Caco-2 (cell line): ENCODE measurements at regions of chr17 and their contacts with region 1.

Region 1: GRCh38 chr17:79796763-79797491 is at the start of gene CBX8:
- DNase-seq: peak; percentile 100
- H3K4me3 ChIP-seq: peak within 1 kb of the TSS; percentile 75
- H3K4me3 Mint-ChIP-seq: peak within 1 kb of the TSS; percentile 84
- H3K27ac Mint-ChIP-seq: peak within 1 kb of the TSS; percentile 85
- H3K4me1 ChIP-seq: peaks cover 28% of the 10 kb centered on the region
- H3K4me1 Mint-ChIP-seq: peaks cover 15% of the 10 kb centered on the region
- H3K27me3 ChIP-seq: no peaks in the 10 kb centered on the region
- H3K27me3 Mint-ChIP-seq: no peaks in the 10 kb centered on the region
- CTCF ChIP-seq: peak in 1 of 2 experiments; percentile 24
- total RNA-seq, gene CBX8: 34.3 and 36.6 TPM in 2 replicates

Region 2: GRCh38 chr17:79741751-79742588 is 55.0 kb before region 1 on chr17:
- CTCF ChIA-PET with region 1: interaction called, 24 read pairs
- POLR2A ChIA-PET with region 1: interaction called, 27 read pairs
- intact Hi-C with region 1: loop called (anchors 1 kb)
- DNase-seq: peak; percentile 91 to 98
- H3K4me3 ChIP-seq: peak overlapping the region; percentile 56
- H3K4me3 Mint-ChIP-seq: peak overlapping the region; percentile 75
- H3K27ac Mint-ChIP-seq: peak overlapping the region; percentile 45
- H3K4me1 ChIP-seq: peaks cover 60% of the 10 kb centered on the region
- H3K4me1 Mint-ChIP-seq: peaks cover 21% of the 10 kb centered on the region
- H3K27me3 ChIP-seq: no peaks in the 10 kb centered on the region
- H3K27me3 Mint-ChIP-seq: no peaks in the 10 kb centered on the region
- CTCF ChIP-seq: peak; percentile 95 to 98

Region 3: GRCh38 chr17:79746889-79747507 is 49.9 kb before region 1 on chr17:
- CTCF ChIA-PET with region 1: interaction called, 24 read pairs
- POLR2A ChIA-PET with region 1: interaction called, 27 read pairs
- intact Hi-C with region 1: loop called (anchors 1 kb)
- DNase-seq: no peak
- H3K4me3 ChIP-seq: no peak overlapping the region
- H3K4me3 Mint-ChIP-seq: no peak overlapping the region
- H3K27ac Mint-ChIP-seq: no peak overlapping the region
- H3K4me1 ChIP-seq: peaks cover 39% of the 10 kb centered on the region
- H3K4me1 Mint-ChIP-seq: peaks cover 10% of the 10 kb centered on the region
- H3K27me3 ChIP-seq: no peaks in the 10 kb centered on the region
- H3K27me3 Mint-ChIP-seq: no peaks in the 10 kb centered on the region
- CTCF ChIP-seq: no peak

Region 4: GRCh38 chr17:79777894-79778503 is 18.9 kb before region 1 on chr17 and contains the start of gene CBX2:
- CTCF ChIA-PET with region 1: interaction called, 4 read pairs
- POLR2A ChIA-PET with region 1: interaction called, 10 read pairs
- intact Hi-C with region 1: loop called (anchors 2 kb)
- DNase-seq: peak; percentile 76 to 92
- H3K4me3 ChIP-seq: peak within 1 kb of the TSS; percentile 88
- H3K4me3 Mint-ChIP-seq: peak within 1 kb of the TSS; percentile 99
- H3K27ac Mint-ChIP-seq: peak within 1 kb of the TSS; percentile 75
- H3K4me1 ChIP-seq: peaks cover 19% of the 10 kb centered on the region
- H3K4me1 Mint-ChIP-seq: peaks cover 22% of the 10 kb centered on the region
- H3K27me3 ChIP-seq: no peaks in the 10 kb centered on the region
- H3K27me3 Mint-ChIP-seq: no peaks in the 10 kb centered on the region
- CTCF ChIP-seq: no peak
- total RNA-seq, gene CBX2: 50.0 and 52.8 TPM in 2 replicates

Region 5: DNA sequence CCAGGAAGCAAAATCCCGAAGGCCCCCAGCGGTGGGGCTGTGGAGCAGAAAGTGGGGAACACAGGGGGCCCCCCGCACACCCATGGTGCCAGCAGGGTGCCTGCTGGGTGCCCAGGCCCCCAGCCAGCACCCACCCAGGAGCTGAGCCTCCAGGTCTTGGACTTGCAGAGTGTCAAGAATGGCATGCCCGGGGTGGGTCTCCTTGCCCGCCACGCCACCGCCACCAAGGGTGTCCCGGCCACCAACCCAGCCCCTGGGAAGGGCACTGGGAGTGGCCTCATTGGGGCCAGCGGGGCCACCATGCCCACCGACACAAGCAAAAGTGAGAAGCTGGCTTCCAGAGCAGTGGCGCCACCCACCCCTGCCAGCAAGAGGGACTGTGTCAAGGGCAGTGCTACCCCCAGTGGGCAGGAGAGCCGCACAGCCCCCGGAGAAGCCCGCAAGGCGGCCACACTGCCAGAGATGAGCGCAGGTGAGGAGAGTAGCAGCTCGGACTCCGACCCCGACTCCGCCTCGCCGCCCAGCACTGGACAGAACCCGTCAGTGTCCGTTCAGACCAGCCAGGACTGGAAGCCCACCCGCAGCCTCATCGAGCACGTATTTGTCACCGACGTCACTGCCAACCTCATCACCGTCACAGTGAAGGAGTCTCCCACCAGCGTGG is 12.4 kb before region 1 on chr17:
- CTCF ChIA-PET with region 1: interaction called, 7 read pairs
- POLR2A ChIA-PET with region 1: interaction called, 16 read pairs
- intact Hi-C with region 1: no loop called
- DNase-seq: no peak
- H3K4me3 ChIP-seq: no peak overlapping the region
- H3K4me3 Mint-ChIP-seq: no peak overlapping the region
- H3K27ac Mint-ChIP-seq: no peak overlapping the region
- H3K4me1 ChIP-seq: peaks cover 2% of the 10 kb centered on the region; the same call in 1 of the 2 replicates
- H3K4me1 Mint-ChIP-seq: peaks cover 7% of the 10 kb centered on the region
- H3K27me3 ChIP-seq: no peaks in the 10 kb centered on the region
- H3K27me3 Mint-ChIP-seq: no peaks in the 10 kb centered on the region
- CTCF ChIP-seq: no peak

Region 6: GRCh38 chr17:79915850-79916430 is 119.0 kb after region 1 on chr17:
- CTCF ChIA-PET with region 1: interaction called, 7 read pairs
- POLR2A ChIA-PET with region 1: interaction called, 8 read pairs
- intact Hi-C with region 1: loop called (anchors 5 kb)
- DNase-seq: peak; percentile 99
- H3K4me3 ChIP-seq: no peak overlapping the region
- H3K4me3 Mint-ChIP-seq: peak overlapping the region; percentile 52
- H3K27ac Mint-ChIP-seq: peak overlapping the region; percentile 98
- H3K4me1 ChIP-seq: peaks cover 61% of the 10 kb centered on the region
- H3K4me1 Mint-ChIP-seq: peaks cover 22% of the 10 kb centered on the region
- H3K27me3 ChIP-seq: no peaks in the 10 kb centered on the region
- H3K27me3 Mint-ChIP-seq: no peaks in the 10 kb centered on the region
- CTCF ChIP-seq: peak; percentile 36 to 66